MCF 10A (cell line): ENCODE measurements at regions of chr4 and their contacts with region 1.

Region 1: GRCh38 chr4:40180356-40180755 is 16.5 kb upstream of the RHOH start:
- DNase-seq: peak; percentile 91
- H3K4me3 Mint-ChIP-seq: no peak overlapping the region
- H3K27ac Mint-ChIP-seq: peak overlapping the region; percentile 66
- H3K4me1 Mint-ChIP-seq: peaks cover 7% of the 10 kb centered on the region
- H3K27me3 Mint-ChIP-seq: no peaks in the 10 kb centered on the region
- CTCF ChIP-seq: no peak

Region 2: GRCh38 chr4:39846120-39846519 is 334.2 kb before region 1 on chr4:
- CTCF ChIA-PET with region 1: no interaction called
- POLR2A ChIA-PET with region 1: no interaction called
- intact Hi-C with region 1: no loop called
- DNase-seq: peak; percentile 37
- H3K4me3 Mint-ChIP-seq: no peak overlapping the region
- H3K27ac Mint-ChIP-seq: no peak overlapping the region
- H3K4me1 Mint-ChIP-seq: no peaks in the 10 kb centered on the region
- H3K27me3 Mint-ChIP-seq: no peaks in the 10 kb centered on the region
- CTCF ChIP-seq: no peak

Region 3: DNA sequence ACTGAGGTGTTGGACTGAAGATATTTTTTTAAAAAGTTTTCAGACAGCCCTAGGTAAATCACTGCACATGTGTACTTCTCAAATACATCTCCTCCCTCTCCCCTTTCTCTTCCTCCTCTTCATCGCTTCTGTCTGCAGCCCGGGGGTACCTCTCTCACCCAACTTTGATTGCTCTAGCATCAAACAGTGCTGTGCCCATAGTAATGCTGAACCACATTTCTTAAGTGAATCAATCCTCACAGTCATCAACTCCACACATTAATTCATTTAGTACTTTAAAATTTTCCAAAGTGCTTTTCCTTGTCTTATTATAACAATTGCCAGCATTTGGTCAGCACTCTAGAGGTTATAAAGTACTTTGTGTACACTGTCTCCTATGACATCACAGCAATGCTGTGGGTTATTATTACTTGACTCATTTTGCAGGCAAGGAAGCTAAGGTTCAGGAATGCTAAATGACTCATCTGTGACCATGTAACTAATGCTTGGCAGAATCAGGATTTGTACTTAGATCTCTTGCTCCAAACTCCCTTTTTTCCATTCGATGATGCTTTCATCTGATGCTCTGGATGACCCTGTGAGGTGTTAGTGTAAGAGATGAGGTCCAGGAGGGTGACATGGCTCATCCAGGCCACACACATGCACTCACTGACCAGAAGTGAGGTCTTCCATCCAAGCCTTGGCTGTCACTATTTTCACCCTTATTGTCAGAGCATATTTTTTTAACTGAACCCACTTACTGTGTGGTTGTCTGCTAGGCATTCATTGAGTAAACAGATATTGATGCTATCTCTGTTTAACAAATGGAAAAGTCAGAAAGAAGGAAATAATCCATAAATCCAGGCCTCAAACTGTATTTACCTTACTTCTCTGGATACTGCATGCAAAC is 75.3 kb after region 1 on chr4:
- CTCF ChIA-PET with region 1: interaction called, 3 read pairs
- POLR2A ChIA-PET with region 1: interaction called, 19 read pairs
- intact Hi-C with region 1: loop called (anchors 5 kb)
- DNase-seq: peak; percentile 92
- H3K4me3 Mint-ChIP-seq: peak overlapping the region; percentile 1
- H3K27ac Mint-ChIP-seq: peak overlapping the region; percentile 86
- H3K4me1 Mint-ChIP-seq: peaks cover 40% of the 10 kb centered on the region
- H3K27me3 Mint-ChIP-seq: no peaks in the 10 kb centered on the region
- CTCF ChIP-seq: no peak